CD8-positive, alpha-beta T cell (primary cell): ENCODE measurements at regions of chr15 and their contacts with region 1.

Region 1: GRCh38 chr15:67065444-67066093 is at the start of gene SMAD3:
- DNase-seq: peak; percentile 38 to 89 (median 71)
- ATAC-seq: peak; percentile 63
- H3K4me3 ChIP-seq: peak within 1 kb of the TSS; percentile 86 to 89
- H3K4me3 Mint-ChIP-seq: peak within 1 kb of the TSS; percentile 87
- H3K27ac ChIP-seq: peak within 1 kb of the TSS; percentile 44 to 51
- H3K27ac Mint-ChIP-seq: peak within 1 kb of the TSS; percentile 75
- H3K4me1 ChIP-seq: peaks cover 37% of the 10 kb centered on the region
- H3K4me1 Mint-ChIP-seq: peaks cover 49% of the 10 kb centered on the region
- H3K27me3 ChIP-seq: no peaks in the 10 kb centered on the region
- H3K27me3 Mint-ChIP-seq: no peaks in the 10 kb centered on the region
- CTCF ChIP-seq: no peak
- total RNA-seq, gene SMAD3: 25.4 to 29.0 TPM

Region 2: DNA sequence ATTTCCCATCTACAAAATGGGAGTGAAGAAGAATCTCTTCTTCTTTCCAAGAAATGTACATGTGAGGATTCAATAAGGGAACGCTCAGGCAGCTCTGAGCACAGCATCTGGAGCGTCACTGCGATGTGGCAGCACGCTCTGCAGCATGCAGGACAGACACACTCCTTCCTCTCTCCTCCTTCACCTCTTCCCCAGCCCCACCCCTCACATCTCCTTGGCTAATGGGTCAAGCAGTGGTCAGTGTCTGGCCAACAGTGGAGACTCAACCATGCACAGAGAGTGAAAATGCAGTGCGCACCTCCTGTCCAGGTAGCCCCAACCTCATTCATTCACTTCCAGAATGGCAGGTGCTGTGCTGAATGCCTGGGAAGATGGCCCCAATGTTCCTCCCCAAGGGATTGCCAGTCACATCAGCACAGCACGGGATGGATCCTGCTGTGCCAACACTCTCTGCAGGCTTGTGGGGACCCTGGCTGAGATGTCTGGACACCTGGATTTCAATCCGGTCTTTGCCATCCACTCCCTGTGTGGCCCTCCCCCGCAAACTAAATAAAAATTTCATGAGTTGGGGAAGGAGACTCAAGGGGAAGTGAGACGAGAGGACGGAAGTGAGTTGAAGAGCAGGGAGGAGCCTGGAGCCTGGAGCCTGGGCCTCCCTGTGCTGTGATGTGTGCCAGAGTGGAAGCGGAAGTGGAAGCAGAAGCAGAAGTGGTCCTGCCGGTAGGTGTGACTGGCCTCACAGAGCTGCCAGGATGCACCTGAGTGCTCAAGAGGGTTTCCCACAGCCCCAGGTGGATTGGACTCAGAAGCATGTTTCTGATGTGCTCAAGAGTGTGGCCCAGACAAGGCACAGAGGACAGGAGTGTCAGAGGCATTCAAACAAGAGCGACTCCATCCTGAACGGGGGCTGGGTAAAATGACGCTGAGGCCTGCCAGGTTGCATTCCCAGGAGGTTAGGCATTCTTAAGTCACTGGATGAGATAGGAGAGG is 199.7 kb before region 1 on chr15:
- CTCF ChIA-PET with region 1: no interaction called
- POLR2A ChIA-PET with region 1: no interaction called
- intact Hi-C with region 1: no loop called
- DNase-seq: peak in 3 of 9 experiments; percentile 24 to 51 (median 40)
- ATAC-seq: no peak
- H3K4me3 ChIP-seq: no peak overlapping the region
- H3K4me3 Mint-ChIP-seq: no peak overlapping the region
- H3K27ac ChIP-seq: no peak overlapping the region
- H3K27ac Mint-ChIP-seq: no peak overlapping the region
- H3K4me1 ChIP-seq: no peaks in the 10 kb centered on the region
- H3K4me1 Mint-ChIP-seq: no peaks in the 10 kb centered on the region
- H3K27me3 ChIP-seq: no peaks in the 10 kb centered on the region
- H3K27me3 Mint-ChIP-seq: peaks cover 43% of the 10 kb centered on the region
- CTCF ChIP-seq: no peak

Region 3: DNA sequence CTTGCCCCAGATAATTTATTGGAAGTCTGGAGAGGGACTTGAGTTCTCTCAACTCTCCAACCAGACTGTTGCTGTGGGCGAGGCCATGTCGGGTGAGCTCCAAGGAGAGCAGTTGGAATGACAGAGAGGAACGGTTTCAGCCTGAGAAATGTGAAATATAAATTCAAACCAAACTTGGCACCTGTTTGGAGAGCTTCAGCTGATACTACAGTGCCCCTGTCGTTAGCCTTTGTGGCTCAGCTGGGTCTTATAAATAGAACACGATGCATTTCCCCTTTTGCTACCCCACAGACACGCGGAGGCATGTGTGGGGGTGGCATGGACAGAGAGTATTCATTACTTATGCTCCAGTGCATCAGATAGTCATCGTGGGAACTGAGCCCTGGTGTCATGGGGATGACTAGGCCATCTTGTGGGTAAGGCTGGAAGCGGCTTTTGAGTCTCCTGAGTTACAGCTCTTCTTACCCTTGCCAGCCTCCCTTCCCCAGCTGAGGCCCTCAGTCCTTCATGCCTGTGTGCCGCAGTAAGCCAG is 15.4 kb after region 1 on chr15:
- CTCF ChIA-PET with region 1: interaction called, 44 read pairs
- POLR2A ChIA-PET with region 1: interaction called, 6 read pairs
- intact Hi-C with region 1: loop called in 1 of 2 experiments (anchors 1 kb)
- DNase-seq: peak in 5 of 9 experiments; percentile 33 to 74 (median 55)
- ATAC-seq: peak; percentile 41
- H3K4me3 ChIP-seq: no peak overlapping the region
- H3K4me3 Mint-ChIP-seq: peak overlapping the region; percentile 33
- H3K27ac ChIP-seq: peak overlapping the region in 1 of 2 experiments; percentile 31
- H3K27ac Mint-ChIP-seq: peak overlapping the region; percentile 72
- H3K4me1 ChIP-seq: peaks cover 55% of the 10 kb centered on the region
- H3K4me1 Mint-ChIP-seq: peaks cover 85% of the 10 kb centered on the region
- H3K27me3 ChIP-seq: no peaks in the 10 kb centered on the region
- H3K27me3 Mint-ChIP-seq: no peaks in the 10 kb centered on the region
- CTCF ChIP-seq: no peak

Region 4: DNA sequence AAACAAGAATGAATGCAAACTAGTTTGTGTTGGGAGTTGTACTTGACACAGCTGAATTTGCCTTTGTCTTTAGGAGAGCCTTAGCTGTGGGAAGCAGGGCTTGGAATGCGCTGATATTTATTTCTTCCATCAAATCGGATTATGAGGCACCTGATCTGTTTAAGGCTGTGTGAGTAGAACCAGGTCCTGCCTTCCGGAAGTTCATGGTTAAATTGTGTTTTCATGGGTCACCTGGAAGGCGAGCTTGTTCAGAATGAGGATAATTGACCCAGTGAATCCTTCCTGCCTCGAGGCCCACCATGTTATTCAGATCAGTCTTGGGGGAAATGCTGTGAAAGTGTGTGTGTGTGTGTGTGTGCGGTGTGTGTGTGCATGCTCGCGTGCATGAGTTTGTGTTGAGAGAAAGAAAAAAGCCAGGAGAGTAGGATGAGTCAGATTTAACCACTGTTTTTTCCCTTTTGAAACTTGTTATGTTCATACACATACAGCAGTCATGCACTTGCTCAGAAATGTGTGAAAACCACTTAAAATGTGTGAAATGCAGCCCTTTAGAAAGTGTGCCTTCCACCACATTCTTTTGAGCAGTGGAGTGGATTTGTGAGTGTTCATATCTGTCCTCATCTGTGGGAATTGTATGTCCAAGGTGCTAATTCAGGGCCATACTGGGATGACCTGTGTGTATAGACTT is 36.5 kb after region 1 on chr15:
- CTCF ChIA-PET with region 1: interaction called, 3 read pairs
- POLR2A ChIA-PET with region 1: interaction called, 14 read pairs
- intact Hi-C with region 1: loop called (anchors 2 to 5 kb)
- DNase-seq: peak in 8 of 9 experiments; percentile 34 to 92 (median 56)
- ATAC-seq: peak; percentile 61
- H3K4me3 ChIP-seq: peak overlapping the region in 1 of 2 experiments; percentile 9
- H3K4me3 Mint-ChIP-seq: no peak overlapping the region
- H3K27ac ChIP-seq: peak overlapping the region in 1 of 2 experiments; percentile 71
- H3K27ac Mint-ChIP-seq: no peak overlapping the region
- H3K4me1 ChIP-seq: peaks cover 86% of the 10 kb centered on the region
- H3K4me1 Mint-ChIP-seq: peaks cover 29% of the 10 kb centered on the region
- H3K27me3 ChIP-seq: no peaks in the 10 kb centered on the region
- H3K27me3 Mint-ChIP-seq: no peaks in the 10 kb centered on the region
- CTCF ChIP-seq: no peak

Region 5: DNA sequence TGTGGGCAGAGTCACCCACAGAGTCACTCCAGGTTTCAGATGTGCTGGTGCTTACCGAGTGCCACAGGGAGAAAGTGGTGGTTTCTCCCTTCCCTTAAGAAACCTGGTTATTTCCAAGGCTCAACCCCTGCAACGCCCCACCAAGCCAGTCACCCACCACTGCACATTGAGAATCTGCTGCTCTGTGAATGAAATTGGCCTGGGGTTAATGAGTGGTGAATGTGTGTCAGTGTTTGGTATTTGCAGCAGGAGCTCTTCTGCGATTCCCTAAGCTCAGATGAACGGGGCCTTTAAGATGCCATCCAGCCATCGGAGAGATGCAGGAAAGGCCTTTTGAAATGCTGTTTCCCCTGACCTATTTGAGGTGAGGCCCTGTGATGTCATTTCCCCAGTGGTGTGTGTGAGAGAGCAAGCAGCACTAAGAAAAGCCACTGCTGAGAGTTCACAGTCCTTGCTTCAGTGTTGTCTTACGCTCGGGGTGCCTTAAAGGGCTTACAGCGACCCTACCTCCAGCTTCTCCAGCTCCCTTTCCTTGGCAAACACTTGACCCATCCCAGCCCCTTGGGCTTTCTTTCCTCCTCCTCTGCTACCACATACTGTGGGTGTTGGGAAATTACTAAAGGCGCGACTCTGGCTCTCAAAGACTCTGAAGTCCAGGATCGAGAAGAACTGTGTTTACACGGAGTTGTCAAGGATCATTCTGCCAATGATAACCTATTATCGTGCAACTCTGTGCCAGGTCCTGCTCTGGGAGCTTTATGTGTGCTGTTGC is 68.7 kb after region 1 on chr15:
- CTCF ChIA-PET with region 1: interaction called, 3 read pairs
- POLR2A ChIA-PET with region 1: interaction called, 5 read pairs
- intact Hi-C with region 1: loop called (anchors 2 kb)
- DNase-seq: peak; percentile 37 to 93 (median 69)
- ATAC-seq: peak; percentile 95
- H3K4me3 ChIP-seq: peak overlapping the region; percentile 45 to 52
- H3K4me3 Mint-ChIP-seq: peak overlapping the region; percentile 84
- H3K27ac ChIP-seq: peak overlapping the region; percentile 80 to 96
- H3K27ac Mint-ChIP-seq: peak overlapping the region; percentile 99
- H3K4me1 ChIP-seq: peaks cover 43% of the 10 kb centered on the region
- H3K4me1 Mint-ChIP-seq: peaks cover 87% of the 10 kb centered on the region
- H3K27me3 ChIP-seq: no peaks in the 10 kb centered on the region
- H3K27me3 Mint-ChIP-seq: no peaks in the 10 kb centered on the region
- CTCF ChIP-seq: no peak

Region 6: DNA sequence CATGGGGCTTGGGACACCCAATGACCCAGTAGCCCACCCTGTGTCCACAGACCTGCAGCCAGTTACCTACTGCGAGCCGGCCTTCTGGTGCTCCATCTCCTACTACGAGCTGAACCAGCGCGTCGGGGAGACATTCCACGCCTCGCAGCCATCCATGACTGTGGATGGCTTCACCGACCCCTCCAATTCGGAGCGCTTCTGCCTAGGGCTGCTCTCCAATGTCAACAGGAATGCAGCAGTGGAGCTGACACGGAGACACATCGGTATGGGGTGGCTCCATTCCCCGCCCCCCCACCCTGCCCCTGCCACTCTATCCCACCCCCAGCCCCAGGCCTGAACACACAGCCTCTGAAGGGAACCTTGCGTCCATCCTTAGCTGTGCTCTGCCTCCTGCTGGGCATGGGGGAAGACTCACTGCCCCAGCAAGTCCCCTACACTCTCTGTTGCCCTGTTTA is 115.6 kb after region 1 on chr15:
- CTCF ChIA-PET with region 1: interaction called, 3 read pairs
- POLR2A ChIA-PET with region 1: no interaction called
- intact Hi-C with region 1: loop called in 1 of 2 experiments (anchors 5 kb)
- DNase-seq: peak in 3 of 9 experiments; percentile 14 to 42 (median 33)
- ATAC-seq: no peak
- H3K4me3 ChIP-seq: no peak overlapping the region
- H3K4me3 Mint-ChIP-seq: no peak overlapping the region
- H3K27ac ChIP-seq: no peak overlapping the region
- H3K27ac Mint-ChIP-seq: no peak overlapping the region
- H3K4me1 ChIP-seq: no peaks in the 10 kb centered on the region
- H3K4me1 Mint-ChIP-seq: peaks cover 5% of the 10 kb centered on the region
- H3K27me3 ChIP-seq: no peaks in the 10 kb centered on the region
- H3K27me3 Mint-ChIP-seq: no peaks in the 10 kb centered on the region
- CTCF ChIP-seq: no peak

Region 7: DNA sequence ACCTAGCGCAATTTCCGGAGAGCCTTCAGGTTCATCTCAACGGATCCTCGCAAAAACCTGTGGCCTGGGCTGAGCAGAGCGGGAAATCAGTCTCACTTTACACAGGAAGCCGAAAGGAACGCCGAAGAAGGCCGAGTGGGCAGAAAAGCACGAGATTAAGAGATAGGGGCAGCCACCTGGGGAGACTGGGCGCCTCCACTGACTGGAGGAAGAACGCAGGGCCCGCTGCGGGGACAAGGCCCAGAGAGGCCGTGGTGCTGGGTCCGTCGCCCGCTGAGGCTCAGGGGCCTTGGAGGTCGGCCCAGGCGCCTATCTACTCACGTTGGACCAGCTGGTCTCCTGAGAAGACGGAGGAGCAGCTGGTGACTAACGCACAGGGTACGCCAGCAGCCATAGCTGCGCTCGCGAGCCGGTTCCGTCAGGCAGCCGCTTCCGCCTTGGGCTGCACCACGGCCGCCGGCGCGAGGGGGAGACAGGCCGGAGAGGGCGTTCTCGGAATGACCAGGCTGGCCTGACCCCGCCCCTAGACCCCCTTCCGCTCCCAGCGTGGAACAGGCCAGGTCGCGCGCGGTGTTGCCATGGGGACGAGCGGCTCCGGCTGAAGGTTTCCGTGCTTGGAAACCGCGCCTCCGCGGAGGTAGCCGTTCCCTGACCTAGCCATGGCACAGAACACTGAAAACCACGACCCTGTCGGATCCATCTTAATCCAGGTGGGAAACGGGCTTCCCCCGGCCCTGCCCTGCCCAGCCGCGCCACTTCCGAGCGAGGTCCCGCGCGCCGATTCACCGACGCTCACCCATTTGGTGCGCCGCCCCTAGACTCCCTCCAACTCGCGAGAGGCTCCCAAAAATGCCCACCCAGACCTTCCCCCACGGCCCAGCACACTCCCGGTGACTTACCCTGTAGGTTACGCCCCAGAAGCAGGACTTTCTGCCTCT is 188.9 kb after region 1 on chr15 and contains the starts of genes AAGAB and IQCH:
- CTCF ChIA-PET with region 1: no interaction called
- POLR2A ChIA-PET with region 1: no interaction called
- intact Hi-C with region 1: loop called (anchors 1 to 2 kb)
- DNase-seq: peak; percentile 93 to 99 (median 97)
- ATAC-seq: peak; percentile 93
- H3K4me3 ChIP-seq: peak within 1 kb of the TSS; percentile 78 to 92
- H3K4me3 Mint-ChIP-seq: peak within 1 kb of the TSS; percentile 98
- H3K27ac ChIP-seq: peak within 1 kb of the TSS; percentile 79 to 86
- H3K27ac Mint-ChIP-seq: peak within 1 kb of the TSS; percentile 98
- H3K4me1 ChIP-seq: peaks cover 13% of the 10 kb centered on the region
- H3K4me1 Mint-ChIP-seq: peaks cover 44% of the 10 kb centered on the region
- H3K27me3 ChIP-seq: peaks cover 0 to 3% of the 10 kb centered on the region in 2 experiments
- H3K27me3 Mint-ChIP-seq: no peaks in the 10 kb centered on the region
- CTCF ChIP-seq: no peak
- total RNA-seq, gene AAGAB: 17.0 to 18.0 TPM
- total RNA-seq, gene IQCH: 0.39 to 0.60 TPM